Activated naive CD8-positive, alpha-beta T cell treated with anti-CD3 and anti-CD28 coated beads, Interleukin-2, amount 10 ng/mL, durations not matched to agents 7 days and 5 days (primary cell): ENCODE measurements at regions of chr3 and their contacts with region 1.

Region 1: DNA sequence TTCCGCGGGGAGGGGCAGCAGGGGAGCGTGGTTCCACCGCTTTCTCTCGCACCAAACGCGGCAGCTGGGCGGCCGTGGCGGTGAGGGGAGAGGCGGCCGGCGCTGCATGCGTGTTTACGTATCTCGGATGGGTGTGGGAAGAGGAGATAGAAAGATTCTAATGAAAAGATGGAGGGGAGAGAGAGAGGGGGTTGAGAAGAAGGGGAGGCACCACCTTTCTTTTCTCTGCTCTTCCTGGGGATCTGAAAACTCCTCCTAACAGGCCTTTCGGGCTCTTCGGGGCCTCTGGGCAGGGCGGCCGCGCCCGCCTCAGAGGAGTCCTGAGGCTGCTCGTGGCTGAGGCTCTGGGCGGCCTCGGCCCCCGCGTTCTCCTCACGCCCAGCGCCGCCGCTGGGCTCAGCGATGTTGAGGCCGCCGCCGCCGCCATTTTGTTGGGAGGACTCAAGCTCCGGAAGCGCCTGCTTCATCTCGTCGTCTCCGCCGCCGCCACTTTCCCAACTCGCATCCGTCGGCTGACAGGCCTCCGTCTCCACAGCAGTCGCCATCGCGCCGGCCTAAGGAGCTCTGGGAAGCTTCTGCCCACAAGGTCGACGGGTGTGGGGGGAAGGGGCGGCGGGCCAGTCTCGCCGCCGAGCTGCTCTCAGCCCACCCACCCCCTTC is 473 bp downstream of the TASOR start:
- DNase-seq: peak; percentile 86
- ATAC-seq: peak; percentile 76
- H3K4me3 Mint-ChIP-seq: peak overlapping the region; percentile 98
- H3K27ac Mint-ChIP-seq: peak overlapping the region; percentile 99
- H3K4me1 Mint-ChIP-seq: peaks cover 32% of the 10 kb centered on the region
- H3K27me3 Mint-ChIP-seq: no peaks in the 10 kb centered on the region

Region 2: GRCh38 chr3:56693750-56694149 is 11.2 kb after region 1 on chr3:
- POLR2A ChIA-PET with region 1: interaction called, 80 read pairs
- DNase-seq: no peak
- ATAC-seq: no peak
- H3K4me3 Mint-ChIP-seq: peak overlapping the region; percentile 89
- H3K27ac Mint-ChIP-seq: peak overlapping the region; percentile 90
- H3K4me1 Mint-ChIP-seq: peaks cover 32% of the 10 kb centered on the region
- H3K27me3 Mint-ChIP-seq: no peaks in the 10 kb centered on the region

Region 3: GRCh38 chr3:56711344-56711743 is 28.8 kb after region 1 on chr3:
- POLR2A ChIA-PET with region 1: no interaction called
- DNase-seq: no peak
- ATAC-seq: no peak
- H3K4me3 Mint-ChIP-seq: no peak overlapping the region
- H3K27ac Mint-ChIP-seq: peak overlapping the region; percentile 35
- H3K4me1 Mint-ChIP-seq: peaks cover 8% of the 10 kb centered on the region
- H3K27me3 Mint-ChIP-seq: no peaks in the 10 kb centered on the region

Region 4: GRCh38 chr3:56737006-56737405 is 54.4 kb after region 1 on chr3:
- POLR2A ChIA-PET with region 1: no interaction called
- DNase-seq: no peak
- ATAC-seq: no peak
- H3K4me3 Mint-ChIP-seq: no peak overlapping the region
- H3K27ac Mint-ChIP-seq: no peak overlapping the region
- H3K4me1 Mint-ChIP-seq: peaks cover 39% of the 10 kb centered on the region
- H3K27me3 Mint-ChIP-seq: no peaks in the 10 kb centered on the region

Region 5: DNA sequence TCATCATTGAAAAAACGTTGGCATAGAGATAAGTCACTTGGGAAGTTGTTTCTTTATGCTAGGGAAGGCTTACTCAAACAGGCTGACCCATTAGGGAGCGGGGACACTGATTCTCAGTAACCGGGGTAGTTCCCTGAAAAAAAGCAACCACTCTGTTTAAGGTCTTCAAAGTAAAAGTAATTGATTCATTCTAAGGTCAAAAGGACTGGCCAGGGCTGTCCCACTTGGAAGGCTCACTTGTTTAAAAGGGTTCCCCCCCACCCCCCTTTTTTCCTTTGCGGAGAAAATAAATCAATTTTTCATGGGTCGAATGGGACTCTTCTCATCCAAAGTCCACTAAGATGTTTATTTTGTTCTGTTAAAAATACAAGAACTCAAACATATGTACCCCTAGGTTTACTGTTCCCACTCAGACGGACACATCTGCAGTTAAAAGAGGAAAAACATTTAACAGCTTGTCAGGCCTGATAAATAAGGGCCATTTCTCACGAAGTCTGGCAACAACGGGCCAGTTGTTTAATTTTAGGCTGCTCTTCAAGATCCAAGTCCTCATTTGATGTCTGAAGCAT is 66.2 kb after region 1 on chr3:
- POLR2A ChIA-PET with region 1: no interaction called
- DNase-seq: no peak
- ATAC-seq: no peak
- H3K4me3 Mint-ChIP-seq: no peak overlapping the region
- H3K27ac Mint-ChIP-seq: no peak overlapping the region
- H3K4me1 Mint-ChIP-seq: peaks cover 47% of the 10 kb centered on the region
- H3K27me3 Mint-ChIP-seq: no peaks in the 10 kb centered on the region

Region 6: GRCh38 chr3:57572096-57572495 is 889.5 kb after region 1 on chr3:
- POLR2A ChIA-PET with region 1: no interaction called
- DNase-seq: no peak
- ATAC-seq: no peak
- H3K4me3 Mint-ChIP-seq: no peak overlapping the region
- H3K27ac Mint-ChIP-seq: no peak overlapping the region
- H3K4me1 Mint-ChIP-seq: peaks cover 4% of the 10 kb centered on the region
- H3K27me3 Mint-ChIP-seq: no peaks in the 10 kb centered on the region